ENCODE measurements at regions of chr2 and their contacts with region 1.

Region 1: GRCh38 chr2:32237996-32238395 is 26.7 kb downstream of the NLRC4 start:
- DNase-seq: no peak
- H3K4me3 ChIP-seq: no peak overlapping the region
- H3K27ac ChIP-seq: no peak overlapping the region
- H3K4me1 ChIP-seq: no peaks in the 10 kb centered on the region
- H3K27me3 ChIP-seq: no peaks in the 10 kb centered on the region
- CTCF ChIP-seq: no peak

Region 2: GRCh38 chr2:32289165-32289999 is 51.4 kb after region 1 on chr2:
- CTCF ChIA-PET with region 1: interaction called, 17 read pairs
- POLR2A ChIA-PET with region 1: no interaction called
- intact Hi-C with region 1: no loop called
- DNase-seq: peak in 1 of 2 experiments; percentile 80
- H3K4me3 ChIP-seq: no peak overlapping the region
- H3K27ac ChIP-seq: peak overlapping the region; percentile 73
- H3K4me1 ChIP-seq: peaks cover 26% of the 10 kb centered on the region
- H3K27me3 ChIP-seq: no peaks in the 10 kb centered on the region
- CTCF ChIP-seq: no peak

Measured in PC-9 (cell line).